ENCODE measurements at regions of chr20 and their contacts with region 1.

Region 1: GRCh38 chr20:62793912-62794724 is 2.2 kb upstream of the MRGBP start:
- DNase-seq: peak; percentile 85 to 100 (median 93)
- ATAC-seq: peak; percentile 87
- H3K4me3 ChIP-seq: peak overlapping the region; percentile 78
- H3K4me3 Mint-ChIP-seq: peak overlapping the region; percentile 78 to 95 (median 87)
- H3K27ac ChIP-seq: peak overlapping the region; percentile 83
- H3K27ac Mint-ChIP-seq: peak overlapping the region; percentile 86 to 97 (median 92)
- H3K4me1 ChIP-seq: peaks cover 15 to 24% of the 10 kb centered on the region in 2 donors
- H3K4me1 Mint-ChIP-seq: peaks cover 26 to 44% (median 41%) of the 10 kb centered on the region in 7 donors
- H3K27me3 ChIP-seq: no peaks in the 10 kb centered on the region
- H3K27me3 Mint-ChIP-seq: peaks cover 0 to 3% (median 0%) of the 10 kb centered on the region in 5 donors

Region 2: DNA sequence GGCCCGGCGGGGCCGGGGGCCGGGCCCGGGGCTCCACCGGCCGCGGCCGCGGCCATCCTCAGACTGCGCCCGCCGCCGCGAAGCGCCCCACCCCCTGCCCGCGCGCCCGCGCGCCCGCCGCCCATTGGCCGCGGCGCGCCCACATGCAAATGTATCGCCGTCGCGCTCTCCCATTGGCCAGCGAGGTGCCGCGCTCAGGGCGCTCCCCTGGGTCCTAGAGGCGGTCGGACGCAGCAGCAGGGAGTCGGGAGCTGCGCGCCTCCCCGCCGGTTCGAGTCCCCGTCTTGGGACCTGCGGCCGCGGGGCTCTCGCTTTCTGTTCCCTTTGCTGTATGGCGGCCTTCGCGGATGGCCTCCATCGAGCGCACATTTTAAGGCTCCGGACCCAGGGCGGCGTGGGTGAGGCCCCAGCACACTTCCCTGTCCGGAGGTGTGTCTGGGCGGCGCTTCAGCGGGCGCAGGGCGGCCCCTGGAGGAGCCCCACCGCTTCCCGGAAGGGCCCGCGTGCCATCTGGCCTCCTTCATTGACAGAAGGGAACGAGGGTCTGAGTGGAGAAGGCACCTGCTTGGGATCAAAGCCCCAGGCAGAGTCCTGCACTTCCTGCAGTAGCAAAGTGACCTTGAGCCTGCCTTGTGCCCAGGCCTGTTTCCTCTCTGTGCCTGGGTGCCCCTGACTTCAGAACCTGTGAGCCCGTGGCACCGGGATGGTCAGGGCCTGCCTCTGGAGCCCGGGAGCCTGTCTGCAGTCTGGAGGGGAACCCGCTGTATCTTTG is 386.7 kb before region 1 on chr20 and contains the start of gene CABLES2:
- CTCF ChIA-PET with region 1: no interaction called
- POLR2A ChIA-PET with region 1: no interaction called
- intact Hi-C with region 1: loop called (anchors 5 kb)
- DNase-seq: peak; percentile 86 to 94 (median 91)
- ATAC-seq: peak; percentile 98
- H3K4me3 ChIP-seq: peak within 1 kb of the TSS; percentile 74
- H3K4me3 Mint-ChIP-seq: peak within 1 kb of the TSS; percentile 68 to 90 (median 82)
- H3K27ac ChIP-seq: peak within 1 kb of the TSS; percentile 76
- H3K27ac Mint-ChIP-seq: peak within 1 kb of the TSS in 8 of 9 donors; percentile 52 to 88 (median 68)
- H3K4me1 ChIP-seq: peaks cover 17 to 23% of the 10 kb centered on the region in 2 donors
- H3K4me1 Mint-ChIP-seq: peaks cover 19 to 31% (median 26%) of the 10 kb centered on the region in 7 donors
- H3K27me3 ChIP-seq: no peaks in the 10 kb centered on the region
- H3K27me3 Mint-ChIP-seq: peaks cover 0 to 3% (median 0%) of the 10 kb centered on the region in 5 donors
- total RNA-seq, gene CABLES2: 4.3 to 16.7 (median 6.3) TPM

Region 3: GRCh38 chr20:62437927-62438326 is 356.2 kb before region 1 on chr20:
- CTCF ChIA-PET with region 1: no interaction called
- POLR2A ChIA-PET with region 1: no interaction called
- intact Hi-C with region 1: no loop called
- DNase-seq: no peak
- ATAC-seq: no peak
- H3K4me3 ChIP-seq: no peak overlapping the region
- H3K4me3 Mint-ChIP-seq: no peak overlapping the region
- H3K27ac ChIP-seq: no peak overlapping the region
- H3K27ac Mint-ChIP-seq: no peak overlapping the region
- H3K4me1 ChIP-seq: no peaks in the 10 kb centered on the region
- H3K4me1 Mint-ChIP-seq: no peaks in the 10 kb centered on the region
- H3K27me3 ChIP-seq: no peaks in the 10 kb centered on the region
- H3K27me3 Mint-ChIP-seq: peaks cover 14 to 44% (median 16%) of the 10 kb centered on the region in 5 donors

Region 4: GRCh38 chr20:62571667-62572344 is 222.3 kb before region 1 on chr20:
- CTCF ChIA-PET with region 1: no interaction called
- POLR2A ChIA-PET with region 1: no interaction called
- intact Hi-C with region 1: no loop called
- DNase-seq: no peak
- ATAC-seq: peak; percentile 44
- H3K4me3 ChIP-seq: no peak overlapping the region
- H3K4me3 Mint-ChIP-seq: no peak overlapping the region
- H3K27ac ChIP-seq: no peak overlapping the region
- H3K27ac Mint-ChIP-seq: no peak overlapping the region
- H3K4me1 ChIP-seq: no peaks in the 10 kb centered on the region
- H3K4me1 Mint-ChIP-seq: peaks cover 0 to 4% (median 3%) of the 10 kb centered on the region in 7 donors
- H3K27me3 ChIP-seq: no peaks in the 10 kb centered on the region
- H3K27me3 Mint-ChIP-seq: peaks cover 12 to 51% (median 17%) of the 10 kb centered on the region in 5 donors

Region 5: GRCh38 chr20:62652051-62652926 is 141.8 kb before region 1 on chr20:
- CTCF ChIA-PET with region 1: interaction called, 4 read pairs
- POLR2A ChIA-PET with region 1: interaction called, 34 read pairs
- intact Hi-C with region 1: loop called (anchors 1 kb)
- DNase-seq: peak; percentile 44 to 80 (median 75)
- ATAC-seq: peak; percentile 78
- H3K4me3 ChIP-seq: peak overlapping the region; percentile 40
- H3K4me3 Mint-ChIP-seq: peak overlapping the region; percentile 80 to 95 (median 84)
- H3K27ac ChIP-seq: peak overlapping the region; percentile 81
- H3K27ac Mint-ChIP-seq: peak overlapping the region; percentile 93 to 99 (median 97)
- H3K4me1 ChIP-seq: peaks cover 17 to 20% of the 10 kb centered on the region in 2 donors
- H3K4me1 Mint-ChIP-seq: peaks cover 11 to 45% (median 30%) of the 10 kb centered on the region in 7 donors
- H3K27me3 ChIP-seq: no peaks in the 10 kb centered on the region
- H3K27me3 Mint-ChIP-seq: no peaks in the 10 kb centered on the region

Region 6: DNA sequence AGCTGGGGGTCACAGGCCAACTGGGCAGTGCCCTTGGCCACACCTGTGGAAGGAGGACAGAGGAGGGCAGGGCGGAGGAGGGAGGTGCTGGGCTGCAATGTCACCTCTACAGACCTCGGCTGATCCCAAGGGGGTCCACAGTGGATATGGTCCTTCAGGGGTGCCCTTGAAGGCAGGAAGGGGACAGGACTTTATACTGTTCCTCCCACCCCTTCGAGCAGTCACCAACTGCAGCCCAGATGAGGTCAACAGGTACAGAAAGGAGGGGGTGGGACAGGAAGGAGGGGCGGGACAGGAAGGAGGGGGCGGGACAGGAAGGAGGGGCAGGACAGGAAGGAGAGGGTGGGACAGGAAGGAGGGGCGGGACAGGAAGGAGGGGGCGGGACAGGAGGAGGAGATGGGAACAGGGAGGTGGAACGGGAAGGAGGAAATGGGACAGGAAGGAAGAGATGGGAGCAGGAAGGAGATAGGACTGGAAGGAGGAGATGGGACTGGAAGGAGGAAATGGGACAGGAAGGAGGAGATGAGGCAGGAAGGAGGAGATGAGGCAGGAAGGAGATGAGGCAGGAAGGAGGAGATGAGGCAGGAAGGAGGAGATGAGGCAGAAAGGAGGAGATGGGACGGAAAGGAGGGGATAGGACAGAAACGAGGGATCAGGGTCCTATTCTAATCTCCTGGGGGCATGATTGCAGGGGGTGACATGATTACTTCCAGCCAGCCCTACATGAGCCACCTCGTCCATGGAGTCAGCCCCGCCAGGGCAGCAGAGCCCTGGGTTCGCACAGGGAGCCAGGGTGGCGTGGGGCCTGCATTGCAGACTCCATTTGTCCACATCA is 17.2 kb before region 1 on chr20:
- CTCF ChIA-PET with region 1: interaction called, 3 read pairs
- POLR2A ChIA-PET with region 1: interaction called, 40 read pairs
- intact Hi-C with region 1: loop called (anchors 1 kb)
- DNase-seq: peak in 7 of 9 donors; percentile 35 to 70 (median 57)
- ATAC-seq: peak; percentile 78
- H3K4me3 ChIP-seq: peak overlapping the region; percentile 49
- H3K4me3 Mint-ChIP-seq: peak overlapping the region; percentile 51 to 91 (median 66)
- H3K27ac ChIP-seq: peak overlapping the region; percentile 77
- H3K27ac Mint-ChIP-seq: peak overlapping the region; percentile 90 to 95 (median 93)
- H3K4me1 ChIP-seq: peaks cover 24 to 49% of the 10 kb centered on the region in 2 donors
- H3K4me1 Mint-ChIP-seq: peaks cover 35 to 65% (median 58%) of the 10 kb centered on the region in 7 donors
- H3K27me3 ChIP-seq: no peaks in the 10 kb centered on the region
- H3K27me3 Mint-ChIP-seq: no peaks in the 10 kb centered on the region

Region 7: DNA sequence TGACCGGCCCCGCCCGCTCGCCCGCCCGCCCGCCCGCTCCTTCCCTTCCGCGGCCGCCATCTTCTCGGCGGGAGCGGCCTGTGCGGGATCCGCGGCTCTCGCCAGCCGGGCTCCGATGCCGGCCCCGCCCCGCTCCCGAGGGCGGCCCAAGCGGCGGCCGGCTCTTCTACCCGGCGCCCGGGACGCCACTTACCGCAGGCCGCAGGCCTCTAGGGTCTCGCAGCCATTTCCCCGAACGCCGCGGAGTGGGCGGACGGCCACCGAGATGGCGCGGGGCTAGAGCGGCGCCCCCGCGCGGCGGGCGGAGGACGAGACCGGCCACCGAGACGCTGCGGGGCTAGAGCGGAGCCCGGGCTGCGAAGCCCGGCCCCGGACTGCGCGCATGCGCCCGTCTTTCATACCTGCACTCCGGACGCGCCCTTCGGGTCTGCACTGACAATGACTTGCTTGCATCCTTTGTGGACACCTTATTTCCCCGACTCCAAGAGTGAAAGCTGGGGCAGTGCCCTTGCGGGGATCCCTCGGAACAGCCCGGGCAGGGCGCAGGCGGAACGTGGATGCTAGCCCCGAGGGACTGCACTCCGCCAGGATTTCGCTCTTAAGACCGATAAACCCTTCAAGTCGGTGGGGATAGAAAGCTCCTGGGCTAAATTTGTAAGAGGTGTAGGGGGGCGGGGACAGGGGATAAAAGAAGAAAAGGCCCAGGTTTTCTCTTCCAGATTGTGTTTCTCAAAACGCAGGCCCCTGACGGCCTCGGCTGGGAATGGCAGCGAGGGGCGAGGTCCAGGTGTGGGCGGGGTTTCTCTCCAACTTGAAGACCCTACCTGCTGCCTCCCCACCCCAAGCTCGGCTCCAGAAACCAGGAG is 132.4 kb after region 1 on chr20 and contains the start of gene DIDO1:
- CTCF ChIA-PET with region 1: no interaction called
- POLR2A ChIA-PET with region 1: interaction called, 3 read pairs
- intact Hi-C with region 1: loop called in 1 of 2 experiments (anchors 2 kb)
- DNase-seq: peak; percentile 81 to 93 (median 89)
- ATAC-seq: peak; percentile 92
- H3K4me3 ChIP-seq: peak within 1 kb of the TSS; percentile 84
- H3K4me3 Mint-ChIP-seq: peak within 1 kb of the TSS; percentile 94 to 99 (median 96)
- H3K27ac ChIP-seq: peak within 1 kb of the TSS; percentile 95
- H3K27ac Mint-ChIP-seq: peak within 1 kb of the TSS; percentile 90 to 96 (median 94)
- H3K4me1 ChIP-seq: peaks cover 53 to 57% of the 10 kb centered on the region in 2 donors
- H3K4me1 Mint-ChIP-seq: peaks cover 48 to 74% (median 69%) of the 10 kb centered on the region in 7 donors
- H3K27me3 ChIP-seq: no peaks in the 10 kb centered on the region
- H3K27me3 Mint-ChIP-seq: no peaks in the 10 kb centered on the region
- total RNA-seq, gene DIDO1: 66.1 to 139 (median 77.4) TPM

Region 8: GRCh38 chr20:63206904-63207303 is 412.8 kb after region 1 on chr20:
- CTCF ChIA-PET with region 1: no interaction called
- POLR2A ChIA-PET with region 1: no interaction called
- intact Hi-C with region 1: no loop called
- DNase-seq: no peak
- ATAC-seq: no peak
- H3K4me3 ChIP-seq: no peak overlapping the region
- H3K4me3 Mint-ChIP-seq: no peak overlapping the region
- H3K27ac ChIP-seq: no peak overlapping the region
- H3K27ac Mint-ChIP-seq: no peak overlapping the region
- H3K4me1 ChIP-seq: peaks cover 0 to 8% of the 10 kb centered on the region in 2 donors
- H3K4me1 Mint-ChIP-seq: peaks cover 12 to 57% (median 45%) of the 10 kb centered on the region in 7 donors
- H3K27me3 ChIP-seq: no peaks in the 10 kb centered on the region
- H3K27me3 Mint-ChIP-seq: no peaks in the 10 kb centered on the region

Region 9: GRCh38 chr20:63425846-63426485 is 631.8 kb after region 1 on chr20:
- CTCF ChIA-PET with region 1: no interaction called
- POLR2A ChIA-PET with region 1: no interaction called
- intact Hi-C with region 1: no loop called
- DNase-seq: no peak
- ATAC-seq: no peak
- H3K4me3 ChIP-seq: no peak overlapping the region
- H3K4me3 Mint-ChIP-seq: no peak overlapping the region
- H3K27ac ChIP-seq: no peak overlapping the region
- H3K27ac Mint-ChIP-seq: no peak overlapping the region
- H3K4me1 ChIP-seq: no peaks in the 10 kb centered on the region
- H3K4me1 Mint-ChIP-seq: no peaks in the 10 kb centered on the region
- H3K27me3 ChIP-seq: no peaks in the 10 kb centered on the region
- H3K27me3 Mint-ChIP-seq: no peaks in the 10 kb centered on the region

Region 10: GRCh38 chr20:63739130-63740069 is 945.3 kb after region 1 on chr20 and contains the start of gene SLC2A4RG:
- CTCF ChIA-PET with region 1: no interaction called
- POLR2A ChIA-PET with region 1: no interaction called
- intact Hi-C with region 1: loop called in 1 of 2 experiments (anchors 10 kb)
- DNase-seq: peak; percentile 49 to 86 (median 69)
- ATAC-seq: peak; percentile 62
- H3K4me3 ChIP-seq: peak within 1 kb of the TSS; percentile 99
- H3K4me3 Mint-ChIP-seq: peak within 1 kb of the TSS; percentile 33 to 92 (median 80)
- H3K27ac ChIP-seq: peak within 1 kb of the TSS; percentile 71
- H3K27ac Mint-ChIP-seq: peak within 1 kb of the TSS in 1 of 9 donors; percentile 38
- H3K4me1 ChIP-seq: peaks cover 21 to 29% of the 10 kb centered on the region in 2 donors
- H3K4me1 Mint-ChIP-seq: peaks cover 7 to 20% (median 16%) of the 10 kb centered on the region in 7 donors
- H3K27me3 ChIP-seq: no peaks in the 10 kb centered on the region
- H3K27me3 Mint-ChIP-seq: no peaks in the 10 kb centered on the region
- total RNA-seq, gene SLC2A4RG: 88.7 to 136 (median 111) TPM

Measured in naive thymus-derived CD4-positive, alpha-beta T cell (primary cell).